Activated CD4-positive, alpha-beta memory T cell treated with anti-CD3 and anti-CD28 coated beads for 36 hours (primary cell): ENCODE measurements at regions of chr13 and their contacts with region 1.

Region 1: GRCh38 chr13:41193919-41194824 is at the start of gene KBTBD7:
- DNase-seq: peak; percentile 96
- H3K4me3 Mint-ChIP-seq: peak within 1 kb of the TSS; percentile 90
- H3K27ac Mint-ChIP-seq: peak within 1 kb of the TSS; percentile 92
- H3K4me1 Mint-ChIP-seq: peaks cover 43% of the 10 kb centered on the region
- H3K27me3 Mint-ChIP-seq: no peaks in the 10 kb centered on the region
- total RNA-seq, gene KBTBD7: 3.6 to 4.1 TPM

Region 2: DNA sequence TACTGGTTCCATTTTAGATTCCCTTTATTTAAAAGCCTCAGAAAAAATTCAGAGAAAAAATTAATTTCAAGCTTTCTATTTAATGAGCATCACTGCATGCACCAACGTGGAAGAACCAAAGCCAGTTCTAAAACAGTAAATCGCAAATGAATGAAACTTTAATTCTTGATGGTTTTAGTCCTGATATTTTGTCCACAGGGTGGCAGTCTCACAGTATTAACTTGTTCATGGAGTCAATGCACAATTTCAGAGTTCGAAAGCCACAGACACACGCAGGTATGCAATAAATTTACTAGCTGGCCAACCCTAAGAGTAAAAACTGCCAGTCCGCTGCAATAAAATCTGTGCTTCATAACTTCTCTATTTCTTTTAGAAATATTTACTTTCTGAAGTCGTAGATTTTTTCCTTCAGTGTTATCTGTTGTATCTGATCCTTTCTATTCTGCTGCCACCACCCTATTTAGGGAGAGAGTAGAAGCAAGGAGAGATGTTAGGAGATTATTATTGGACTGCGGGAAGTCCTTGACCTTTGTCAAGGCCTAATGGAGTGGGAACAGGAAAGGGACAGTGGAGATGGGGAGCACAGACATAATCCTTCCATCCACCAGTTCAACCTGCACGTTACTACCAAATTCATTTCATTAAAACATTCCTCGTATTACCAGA is 139.8 kb before region 1 on chr13:
- CTCF ChIA-PET with region 1: interaction called, 8 read pairs
- POLR2A ChIA-PET with region 1: no interaction called
- intact Hi-C with region 1: loop called (anchors 1 kb)
- DNase-seq: no peak
- H3K4me3 Mint-ChIP-seq: no peak overlapping the region
- H3K27ac Mint-ChIP-seq: no peak overlapping the region
- H3K4me1 Mint-ChIP-seq: peaks cover 56% of the 10 kb centered on the region
- H3K27me3 Mint-ChIP-seq: no peaks in the 10 kb centered on the region

Region 3: GRCh38 chr13:41132512-41133152 is 61.5 kb before region 1 on chr13 and contains the start of gene KBTBD6:
- CTCF ChIA-PET with region 1: interaction called, 3 read pairs
- POLR2A ChIA-PET with region 1: interaction called, 3 read pairs
- intact Hi-C with region 1: loop called (anchors 1 kb)
- DNase-seq: peak; percentile 98
- H3K4me3 Mint-ChIP-seq: peak within 1 kb of the TSS; percentile 92
- H3K27ac Mint-ChIP-seq: peak within 1 kb of the TSS; percentile 86
- H3K4me1 Mint-ChIP-seq: peaks cover 43% of the 10 kb centered on the region
- H3K27me3 Mint-ChIP-seq: no peaks in the 10 kb centered on the region
- total RNA-seq, gene KBTBD6: 3.6 to 4.2 TPM

Region 4: DNA sequence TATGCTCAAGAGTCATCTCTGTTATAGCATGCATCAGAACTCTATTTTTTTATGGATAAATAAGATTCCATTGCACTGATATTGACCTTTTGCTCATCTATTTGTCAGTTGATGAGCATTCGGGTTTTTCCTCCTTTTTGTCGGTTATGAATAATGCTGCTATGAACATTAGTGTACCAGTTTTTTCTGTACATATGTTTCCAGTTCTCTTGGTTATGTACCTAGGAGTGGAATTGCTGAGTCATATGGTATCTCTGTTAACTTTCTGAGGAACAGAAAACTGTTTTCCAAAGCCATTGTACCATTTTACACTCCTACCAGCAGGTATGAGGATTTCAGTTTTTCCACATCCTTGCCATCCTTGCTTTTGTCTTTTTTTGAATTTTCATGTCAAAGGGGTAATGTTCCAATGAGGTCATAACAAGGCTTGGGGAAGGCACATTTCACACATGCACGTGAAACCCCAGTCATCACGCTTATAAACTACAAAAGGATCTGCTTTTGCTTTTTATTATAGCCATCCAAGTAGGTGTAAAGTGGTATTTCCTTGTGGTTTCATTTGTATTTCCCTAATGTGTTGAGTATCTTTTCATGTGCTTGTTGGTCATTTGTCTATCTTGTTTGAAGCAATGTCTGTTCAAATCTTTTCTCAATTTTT is 14.4 kb before region 1 on chr13:
- CTCF ChIA-PET with region 1: no interaction called
- POLR2A ChIA-PET with region 1: no interaction called
- intact Hi-C with region 1: loop called (anchors 1 kb)
- DNase-seq: no peak
- H3K4me3 Mint-ChIP-seq: no peak overlapping the region
- H3K27ac Mint-ChIP-seq: peak overlapping the region; percentile 52
- H3K4me1 Mint-ChIP-seq: peaks cover 17% of the 10 kb centered on the region
- H3K27me3 Mint-ChIP-seq: no peaks in the 10 kb centered on the region

Region 5: DNA sequence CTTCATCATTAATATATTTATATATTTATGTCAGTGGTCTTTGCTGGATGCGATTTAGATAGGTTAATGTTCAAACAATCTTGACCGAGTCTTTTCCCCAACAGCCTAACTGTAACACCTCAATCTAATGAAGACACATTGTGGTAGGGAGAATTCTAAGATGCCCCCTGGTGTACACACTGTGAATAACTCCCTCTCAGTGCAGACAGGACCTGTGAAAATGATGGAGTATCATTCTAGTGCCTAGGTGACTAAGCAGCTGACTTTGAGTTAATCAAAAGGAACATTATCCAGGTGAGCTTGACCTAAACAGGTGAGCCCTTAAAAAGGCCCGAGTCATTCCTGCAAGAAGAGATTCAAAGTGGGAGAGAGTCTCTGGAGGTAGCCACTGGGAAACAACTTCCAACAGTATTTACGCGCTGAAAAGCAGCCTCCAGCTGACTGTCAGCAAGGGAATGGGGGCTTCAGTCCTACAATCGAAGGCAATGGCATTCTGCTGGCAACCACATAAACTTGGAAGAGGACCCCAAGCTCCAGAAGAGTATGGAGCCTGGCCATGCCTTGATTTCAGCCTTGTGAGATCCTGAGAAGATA is 28.2 kb after region 1 on chr13:
- CTCF ChIA-PET with region 1: interaction called, 6 read pairs
- POLR2A ChIA-PET with region 1: no interaction called
- intact Hi-C with region 1: loop called (anchors 2 kb)
- DNase-seq: peak; percentile 62
- H3K4me3 Mint-ChIP-seq: no peak overlapping the region
- H3K27ac Mint-ChIP-seq: no peak overlapping the region
- H3K4me1 Mint-ChIP-seq: no peaks in the 10 kb centered on the region
- H3K27me3 Mint-ChIP-seq: no peaks in the 10 kb centered on the region

Region 6: GRCh38 chr13:41263261-41264027 is 69.3 kb after region 1 on chr13 and contains the start of gene MTRF1:
- CTCF ChIA-PET with region 1: no interaction called
- POLR2A ChIA-PET with region 1: no interaction called
- intact Hi-C with region 1: loop called (anchors 1 kb)
- DNase-seq: peak; percentile 84
- H3K4me3 Mint-ChIP-seq: peak within 1 kb of the TSS; percentile 90
- H3K27ac Mint-ChIP-seq: peak within 1 kb of the TSS; percentile 96
- H3K4me1 Mint-ChIP-seq: peaks cover 13% of the 10 kb centered on the region
- H3K27me3 Mint-ChIP-seq: no peaks in the 10 kb centered on the region
- total RNA-seq, gene MTRF1: 16.2 to 21.5 TPM